Activated CD4-positive, alpha-beta T cell treated with anti-CD3 and anti-CD28 coated beads, Interleukin-2, amount 10 ng/mL, durations not matched to agents 7 days and 5 days (primary cell): ENCODE measurements at regions of chr1 and their contacts with region 1.

Region 1: DNA sequence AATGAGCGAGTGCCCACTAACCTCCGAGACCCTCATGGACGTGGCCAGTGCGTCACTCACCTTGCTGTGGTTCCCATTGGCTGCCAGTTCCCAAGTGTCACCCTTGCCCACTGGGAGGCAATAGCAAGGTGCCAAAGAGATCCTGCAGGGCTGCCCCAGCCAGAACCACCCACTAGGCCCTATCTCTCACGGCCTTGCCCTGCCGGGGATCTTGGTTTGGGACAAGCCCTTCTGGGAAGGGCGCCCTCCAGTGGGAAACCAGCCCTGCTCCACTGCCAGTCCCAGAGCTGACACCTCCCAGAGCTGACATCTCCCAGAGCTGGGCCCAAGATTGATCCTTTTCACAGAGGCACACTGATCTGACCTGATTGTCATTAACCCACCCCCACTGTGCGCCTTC is 2.1 kb upstream of the SELENON start:
- DNase-seq: peak; percentile 24
- H3K4me3 Mint-ChIP-seq: peak overlapping the region; percentile 22
- H3K27ac Mint-ChIP-seq: no peak overlapping the region
- H3K4me1 Mint-ChIP-seq: peaks cover 70% of the 10 kb centered on the region
- H3K27me3 Mint-ChIP-seq: peaks cover 9% of the 10 kb centered on the region

Region 2: GRCh38 chr1:25447547-25447946 is 350.4 kb before region 1 on chr1:
- CTCF ChIA-PET with region 1: no interaction called
- POLR2A ChIA-PET with region 1: no interaction called
- DNase-seq: no peak
- H3K4me3 Mint-ChIP-seq: no peak overlapping the region
- H3K27ac Mint-ChIP-seq: peak overlapping the region; percentile 25
- H3K4me1 Mint-ChIP-seq: peaks cover 28% of the 10 kb centered on the region
- H3K27me3 Mint-ChIP-seq: no peaks in the 10 kb centered on the region

Region 3: GRCh38 chr1:25711555-25712298 is 86.2 kb before region 1 on chr1:
- CTCF ChIA-PET with region 1: no interaction called
- POLR2A ChIA-PET with region 1: no interaction called
- DNase-seq: peak; percentile 60
- H3K4me3 Mint-ChIP-seq: peak overlapping the region; percentile 12
- H3K27ac Mint-ChIP-seq: peak overlapping the region; percentile 80
- H3K4me1 Mint-ChIP-seq: peaks cover 47% of the 10 kb centered on the region
- H3K27me3 Mint-ChIP-seq: no peaks in the 10 kb centered on the region

Region 4: DNA sequence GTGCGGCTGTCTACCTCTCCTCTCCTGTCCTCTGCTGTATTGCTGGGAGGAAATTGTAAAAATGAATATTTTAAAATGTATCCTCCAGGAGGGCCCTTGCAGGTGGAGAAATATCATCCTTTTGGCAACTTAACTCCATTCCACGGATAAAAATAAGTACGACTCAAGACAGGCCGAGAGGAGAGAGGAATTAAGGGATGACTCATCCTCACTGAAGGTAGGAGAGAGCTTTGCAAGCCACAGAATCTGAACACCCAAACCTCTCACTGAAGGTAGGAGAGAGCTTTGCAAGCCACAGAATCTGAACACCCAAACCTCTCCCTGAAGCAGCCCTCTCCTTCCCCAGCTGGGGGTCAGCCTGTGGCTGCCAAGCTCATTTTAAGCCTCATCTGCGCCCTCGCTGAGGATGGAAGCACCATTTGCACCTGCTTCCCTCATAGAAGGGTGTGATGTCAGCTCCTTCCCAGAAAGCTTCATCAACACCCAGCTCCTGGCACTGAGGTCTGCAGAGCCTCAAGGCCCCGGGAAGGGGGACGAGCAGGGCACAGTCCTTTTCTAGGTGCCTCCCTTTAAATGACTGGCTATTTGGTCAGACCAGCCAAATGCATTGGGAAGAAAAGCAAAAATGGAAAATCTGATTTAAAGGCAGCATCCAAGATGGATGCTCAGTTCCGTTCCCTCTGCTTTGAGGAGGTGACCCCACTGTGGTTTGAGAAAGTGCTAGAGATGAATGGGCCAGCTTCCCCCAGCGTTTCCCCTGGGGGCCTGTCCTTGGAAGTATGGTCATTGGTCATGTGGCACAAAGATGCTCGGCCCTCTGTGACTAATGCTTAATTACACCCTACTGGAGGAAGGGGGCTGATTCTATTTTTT is 10.8 kb before region 1 on chr1:
- CTCF ChIA-PET with region 1: interaction called, 11 read pairs
- POLR2A ChIA-PET with region 1: no interaction called
- DNase-seq: no peak
- H3K4me3 Mint-ChIP-seq: no peak overlapping the region
- H3K27ac Mint-ChIP-seq: no peak overlapping the region
- H3K4me1 Mint-ChIP-seq: no peaks in the 10 kb centered on the region
- H3K27me3 Mint-ChIP-seq: no peaks in the 10 kb centered on the region